ENCODE measurements at regions of chr13 and their contacts with region 1.

Region 1: DNA sequence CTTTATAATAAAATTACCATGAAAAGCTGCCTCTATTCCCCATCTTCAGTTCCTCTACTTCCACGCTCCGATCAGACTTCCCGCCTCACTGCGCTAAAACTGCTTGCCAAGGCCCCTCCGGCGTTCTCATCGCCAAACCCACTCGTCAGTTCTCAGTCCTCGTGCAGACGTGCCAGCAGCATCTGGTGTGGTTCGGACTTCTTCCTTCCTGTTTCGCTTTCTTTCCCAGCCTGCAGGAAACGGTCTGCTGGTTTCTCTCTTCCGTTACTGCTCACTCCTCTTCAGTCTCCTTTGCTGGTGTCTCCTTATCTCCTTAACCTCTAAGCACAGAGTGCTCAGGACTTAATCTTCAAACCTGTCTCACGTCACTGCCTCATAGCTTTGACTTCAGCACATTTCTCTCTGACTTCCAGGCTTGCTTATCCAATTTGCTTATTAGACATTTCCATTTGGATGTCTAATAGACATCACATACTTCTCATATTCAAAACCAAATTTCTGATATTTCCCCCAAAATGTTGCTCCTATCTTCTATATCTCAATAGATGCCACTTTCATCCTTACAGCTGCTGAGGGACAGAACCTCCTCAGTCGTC is 40.3 kb downstream of the RCBTB2 start:
- DNase-seq: peak; percentile 77
- H3K4me3 Mint-ChIP-seq: no peak overlapping the region
- H3K27ac Mint-ChIP-seq: no peak overlapping the region
- H3K4me1 Mint-ChIP-seq: peaks cover 57% of the 10 kb centered on the region
- H3K27me3 Mint-ChIP-seq: no peaks in the 10 kb centered on the region

Region 2: GRCh38 chr13:48184260-48184659 is 308.3 kb before region 1 on chr13:
- intact Hi-C with region 1: no loop called
- DNase-seq: no peak
- H3K4me3 Mint-ChIP-seq: no peak overlapping the region
- H3K27ac Mint-ChIP-seq: no peak overlapping the region
- H3K4me1 Mint-ChIP-seq: peaks cover 22% of the 10 kb centered on the region
- H3K27me3 Mint-ChIP-seq: peaks cover 25% of the 10 kb centered on the region

Region 3: DNA sequence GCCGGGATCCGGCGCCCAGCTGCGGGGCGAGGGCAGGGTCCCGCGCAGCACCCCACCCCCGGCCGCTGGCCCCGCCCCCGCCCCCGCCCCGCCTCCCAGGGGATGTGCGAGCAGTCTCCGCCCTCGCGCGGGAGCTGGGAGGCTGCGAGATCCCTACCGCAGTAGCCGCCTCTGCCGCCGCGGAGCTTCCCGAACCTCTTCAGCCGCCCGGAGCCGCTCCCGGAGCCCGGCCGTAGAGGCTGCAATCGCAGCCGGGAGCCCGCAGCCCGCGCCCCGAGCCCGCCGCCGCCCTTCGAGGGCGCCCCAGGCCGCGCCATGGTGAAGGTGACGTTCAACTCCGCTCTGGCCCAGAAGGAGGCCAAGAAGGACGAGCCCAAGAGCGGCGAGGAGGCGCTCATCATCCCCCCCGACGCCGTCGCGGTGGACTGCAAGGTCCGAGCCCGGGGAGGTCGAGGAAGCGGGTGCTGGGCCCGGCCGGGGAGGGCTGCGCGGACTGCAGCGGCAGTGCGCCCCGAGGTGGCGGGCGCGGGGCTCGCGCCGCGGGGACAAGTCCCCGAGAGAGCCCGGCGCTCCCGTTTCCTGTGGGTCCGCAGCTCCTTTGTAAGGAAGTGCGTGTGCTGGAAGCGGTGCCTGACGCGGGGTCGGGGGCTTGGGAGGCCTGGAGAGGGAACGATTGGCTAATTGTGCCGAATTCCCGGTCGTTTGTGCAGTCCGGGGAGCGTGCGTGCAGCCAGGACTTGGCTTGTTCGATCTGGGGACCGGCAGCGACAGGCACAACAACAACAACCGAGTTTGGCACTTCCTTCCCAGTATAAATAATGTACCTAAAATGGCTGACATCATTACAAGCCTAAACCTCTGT is 259.3 kb before region 1 on chr13 and contains the start of gene ITM2B:
- intact Hi-C with region 1: loop called (anchors 5 kb)
- DNase-seq: peak; percentile 50
- H3K4me3 Mint-ChIP-seq: peak within 1 kb of the TSS; percentile 87
- H3K27ac Mint-ChIP-seq: peak within 1 kb of the TSS; percentile 73
- H3K4me1 Mint-ChIP-seq: peaks cover 38% of the 10 kb centered on the region
- H3K27me3 Mint-ChIP-seq: peaks cover 44% of the 10 kb centered on the region
- total RNA-seq, gene ITM2B: 48.7 and 54.4 TPM in 2 replicates

Region 4: GRCh38 chr13:48346583-48346982 is 146.0 kb before region 1 on chr13:
- intact Hi-C with region 1: loop called (anchors 5 kb)
- DNase-seq: no peak
- H3K4me3 Mint-ChIP-seq: no peak overlapping the region
- H3K27ac Mint-ChIP-seq: no peak overlapping the region
- H3K4me1 Mint-ChIP-seq: peaks cover 11% of the 10 kb centered on the region
- H3K27me3 Mint-ChIP-seq: no peaks in the 10 kb centered on the region

Region 5: DNA sequence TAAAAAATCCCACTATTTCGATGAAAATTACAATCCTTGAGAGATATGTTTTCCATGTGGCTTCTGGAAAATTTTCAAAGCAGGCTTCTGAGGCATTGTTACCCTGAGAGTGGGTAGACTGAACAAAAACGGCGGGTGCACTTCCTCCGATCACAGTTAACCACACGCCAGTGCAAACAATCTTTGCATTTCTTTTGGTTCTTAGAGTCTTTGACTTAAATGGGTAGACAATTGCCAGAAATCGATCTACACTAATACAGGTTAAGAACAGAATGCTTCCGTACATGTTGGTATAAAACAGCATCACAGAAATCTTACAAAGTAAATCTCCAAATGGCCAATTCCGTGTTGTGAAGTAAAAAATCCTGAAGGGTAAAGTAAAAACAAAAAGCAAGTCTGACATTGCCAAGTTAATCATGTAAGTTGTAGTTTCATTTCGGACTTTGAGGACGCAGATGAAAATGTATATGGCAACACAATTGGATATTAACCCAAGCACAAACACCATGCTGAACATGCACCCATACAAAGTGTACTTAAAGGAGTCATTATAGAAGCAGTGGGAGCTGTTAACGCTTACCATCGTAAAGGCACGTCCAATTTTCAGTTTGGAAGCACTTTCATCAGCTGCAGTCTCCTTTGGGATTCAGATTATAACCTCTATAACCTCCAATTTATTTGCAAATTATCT is 80.6 kb before region 1 on chr13:
- intact Hi-C with region 1: loop called (anchors 2 kb)
- DNase-seq: no peak
- H3K4me3 Mint-ChIP-seq: peak overlapping the region; percentile 91
- H3K27ac Mint-ChIP-seq: peak overlapping the region; percentile 90
- H3K4me1 Mint-ChIP-seq: peaks cover 39% of the 10 kb centered on the region
- H3K27me3 Mint-ChIP-seq: no peaks in the 10 kb centered on the region

Region 6: DNA sequence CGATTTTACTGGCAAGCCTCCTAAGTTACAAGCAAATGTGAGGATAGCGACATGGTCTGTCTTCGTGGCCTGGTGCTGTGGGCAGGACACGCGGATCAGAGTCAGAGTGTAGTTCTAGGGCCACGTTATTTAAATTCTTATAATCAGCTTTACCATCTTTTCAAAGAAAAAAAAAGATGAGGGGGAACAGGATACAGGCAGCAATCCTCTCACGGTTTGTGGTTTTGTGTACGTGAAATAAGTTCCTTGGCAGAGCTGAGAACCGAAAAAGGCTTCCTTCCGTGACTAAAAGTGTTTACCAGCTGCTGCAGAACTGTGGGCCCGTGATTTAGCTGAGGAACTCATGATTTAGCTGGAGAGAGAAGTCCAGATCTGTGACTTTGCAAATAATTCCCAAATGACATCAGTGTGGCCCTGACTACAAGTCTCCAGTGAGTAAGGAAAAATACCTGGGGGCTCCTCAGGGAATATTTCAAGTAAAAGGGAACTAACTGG is 13.1 kb after region 1 on chr13:
- intact Hi-C with region 1: loop called (anchors 1 kb)
- DNase-seq: peak; percentile 64
- H3K4me3 Mint-ChIP-seq: peak overlapping the region; percentile 30
- H3K27ac Mint-ChIP-seq: peak overlapping the region; percentile 73
- H3K4me1 Mint-ChIP-seq: peaks cover 75% of the 10 kb centered on the region
- H3K27me3 Mint-ChIP-seq: peaks cover 4% of the 10 kb centered on the region

Region 7: GRCh38 chr13:48562296-48563066 is 69.9 kb after region 1 on chr13:
- intact Hi-C with region 1: loop called (anchors 1 kb)
- DNase-seq: peak; percentile 78
- H3K4me3 Mint-ChIP-seq: peak overlapping the region; percentile 46
- H3K27ac Mint-ChIP-seq: peak overlapping the region; percentile 36
- H3K4me1 Mint-ChIP-seq: peaks cover 57% of the 10 kb centered on the region
- H3K27me3 Mint-ChIP-seq: peaks cover 46% of the 10 kb centered on the region

Region 8: GRCh38 chr13:48749699-48750473 is 257.3 kb after region 1 on chr13:
- intact Hi-C with region 1: loop called (anchors 5 kb)
- DNase-seq: peak; percentile 46
- H3K4me3 Mint-ChIP-seq: no peak overlapping the region
- H3K27ac Mint-ChIP-seq: peak overlapping the region; percentile 70
- H3K4me1 Mint-ChIP-seq: peaks cover 13% of the 10 kb centered on the region
- H3K27me3 Mint-ChIP-seq: peaks cover 2% of the 10 kb centered on the region

Measured in activated T-helper 2 cell treated with anti-CD3 and anti-CD28 coated beads, Interferon-gamma antibody, Interleukin-2, Interleukin-4, amounts not matched to agents 10 μg/mL and 5 μg/mL and 100 μg/mL, durations not matched to agents 14 hours and 24 hours and 36 hours (primary cell).